ENCODE measurements at regions of chr11 and their contacts with region 1.

Region 1: DNA sequence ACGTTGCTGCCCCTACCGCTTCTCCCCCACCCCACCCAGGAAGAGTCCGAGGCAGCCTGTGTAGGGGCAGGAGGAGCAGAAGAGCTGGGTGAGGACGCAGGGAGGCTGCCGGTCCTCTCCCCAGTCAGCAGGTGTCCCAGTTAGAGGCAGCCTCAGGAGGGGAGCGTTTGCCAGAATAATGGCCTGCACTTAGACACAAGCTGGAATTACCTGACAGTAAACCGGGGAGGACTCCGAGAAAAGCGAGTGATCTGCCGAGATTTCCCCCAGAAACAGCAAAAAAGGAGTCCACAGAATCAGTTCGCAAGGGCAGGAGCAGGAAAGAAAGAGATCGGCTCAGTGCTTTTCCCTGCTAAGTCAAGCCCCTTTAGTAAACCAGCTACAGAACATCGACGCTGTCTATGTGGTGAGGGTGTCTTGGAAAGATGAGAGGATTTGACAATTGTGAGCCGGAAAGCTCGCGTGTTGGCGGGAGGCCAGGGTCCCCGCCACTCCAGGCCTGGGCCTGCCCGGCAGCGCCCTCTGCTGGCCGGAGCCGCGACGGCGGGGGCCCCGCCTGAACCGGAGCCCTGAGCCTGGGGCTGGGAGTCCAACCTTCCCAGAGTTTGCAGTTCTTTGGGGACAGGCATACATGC is 17.7 kb upstream of the THRSP start:
- DNase-seq: peak; percentile 60
- ATAC-seq: peak; percentile 95
- H3K4me3 ChIP-seq: peak overlapping the region; percentile 45 to 77 (median 67)
- H3K27ac ChIP-seq: peak overlapping the region; percentile 35
- H3K4me1 ChIP-seq: peaks cover 68% of the 10 kb centered on the region
- H3K27me3 ChIP-seq: no peaks in the 10 kb centered on the region
- CTCF ChIP-seq: peak; percentile 95
- EP300 ChIP-seq: peak in 1 of 2 experiments; percentile 35; a peak in 1 of 4 replicates
- POLR2A ChIP-seq: no peak
- RAD21 ChIP-seq: peak; percentile 97

Region 2: GRCh38 chr11:77908835-77909234 is 137.1 kb before region 1 on chr11:
- CTCF ChIA-PET with region 1: no interaction called
- POLR2A ChIA-PET with region 1: no interaction called
- in situ Hi-C with region 1: no loop called
- intact Hi-C with region 1: loop called (anchors 5 kb)
- DNase-seq: no peak
- ATAC-seq: no peak
- H3K4me3 ChIP-seq: no peak overlapping the region
- H3K27ac ChIP-seq: no peak overlapping the region
- H3K4me1 ChIP-seq: peaks cover 17% of the 10 kb centered on the region
- H3K27me3 ChIP-seq: no peaks in the 10 kb centered on the region
- CTCF ChIP-seq: no peak
- EP300 ChIP-seq: no peak
- POLR2A ChIP-seq: no peak
- RAD21 ChIP-seq: no peak

Region 3: GRCh38 chr11:77994412-77995362 is 51.3 kb before region 1 on chr11 and contains the start of gene INTS4:
- CTCF ChIA-PET with region 1: interaction called, 12 read pairs
- POLR2A ChIA-PET with region 1: interaction called, 25 read pairs
- in situ Hi-C with region 1: no loop called
- intact Hi-C with region 1: no loop called
- DNase-seq: peak; percentile 99
- ATAC-seq: peak; percentile 98
- H3K4me3 ChIP-seq: peak within 1 kb of the TSS; percentile 82 to 99 (median 83)
- H3K27ac ChIP-seq: peak within 1 kb of the TSS; percentile 77
- H3K4me1 ChIP-seq: peaks cover 22% of the 10 kb centered on the region
- H3K27me3 ChIP-seq: no peaks in the 10 kb centered on the region; a peak in 1 of 5 replicates
- CTCF ChIP-seq: no peak; the same call in 1 of the 2 replicates
- EP300 ChIP-seq: no peak
- POLR2A ChIP-seq: peak; percentile 57 to 75
- RAD21 ChIP-seq: peak; percentile 20; the same call in 1 of the 2 replicates
- total RNA-seq, gene INTS4: 29.6 and 37.3 TPM in 2 replicates

Region 4: DNA sequence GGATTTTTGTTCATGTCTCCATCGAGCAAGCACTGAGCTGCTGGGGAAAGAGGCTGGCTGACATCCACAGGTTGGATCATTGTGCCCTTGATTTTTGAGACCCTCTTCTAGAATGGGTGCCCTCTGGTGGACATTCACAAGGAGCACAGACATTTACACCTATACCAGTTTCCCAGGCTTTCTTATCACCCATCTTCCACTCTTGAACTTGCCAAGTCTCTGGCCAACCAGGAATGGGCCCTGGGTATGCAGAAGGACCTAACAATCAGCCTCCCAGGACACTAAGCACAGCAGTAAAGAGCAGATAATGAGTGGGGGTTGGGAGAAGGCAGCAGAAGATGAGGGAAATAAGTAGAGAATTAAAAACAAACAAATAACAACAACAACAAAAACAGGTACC is 45.8 kb before region 1 on chr11:
- CTCF ChIA-PET with region 1: interaction called, 12 read pairs
- POLR2A ChIA-PET with region 1: interaction called, 25 read pairs
- in situ Hi-C with region 1: loop called (anchors 5 kb)
- intact Hi-C with region 1: loop called (anchors 1 kb)
- DNase-seq: peak; percentile 70
- ATAC-seq: peak; percentile 92
- H3K4me3 ChIP-seq: no peak overlapping the region
- H3K27ac ChIP-seq: no peak overlapping the region
- H3K4me1 ChIP-seq: peaks cover 28% of the 10 kb centered on the region
- H3K27me3 ChIP-seq: no peaks in the 10 kb centered on the region
- CTCF ChIP-seq: peak; percentile 80
- EP300 ChIP-seq: no peak
- POLR2A ChIP-seq: no peak
- RAD21 ChIP-seq: peak; percentile 65; the same call in 1 of the 2 replicates

Region 5: DNA sequence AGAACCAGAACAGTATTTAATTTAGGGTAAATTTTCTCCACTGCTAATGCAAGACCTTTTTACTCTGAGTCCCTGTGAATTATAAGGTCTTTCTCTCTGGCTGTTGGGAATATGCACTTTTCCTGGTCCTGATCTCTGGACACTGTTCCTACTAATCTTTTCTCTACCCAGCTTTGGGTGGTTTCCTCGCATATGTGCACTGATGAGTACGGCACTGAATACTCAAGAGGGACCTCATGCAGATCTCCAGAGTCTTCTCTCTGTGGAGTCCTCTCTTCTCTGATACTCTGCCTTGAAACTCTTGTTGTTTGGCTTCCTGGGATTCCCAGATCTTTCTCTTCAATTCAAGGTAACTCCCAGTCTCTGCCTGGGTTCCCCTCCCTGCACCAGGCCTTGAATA is 36.9 kb before region 1 on chr11:
- CTCF ChIA-PET with region 1: no interaction called
- POLR2A ChIA-PET with region 1: no interaction called
- in situ Hi-C with region 1: loop called (anchors 5 kb)
- intact Hi-C with region 1: no loop called
- DNase-seq: no peak
- ATAC-seq: no peak
- H3K4me3 ChIP-seq: no peak overlapping the region
- H3K27ac ChIP-seq: no peak overlapping the region
- H3K4me1 ChIP-seq: peaks cover 35% of the 10 kb centered on the region
- H3K27me3 ChIP-seq: no peaks in the 10 kb centered on the region
- CTCF ChIP-seq: no peak
- EP300 ChIP-seq: no peak
- POLR2A ChIP-seq: no peak
- RAD21 ChIP-seq: no peak

Region 6: DNA sequence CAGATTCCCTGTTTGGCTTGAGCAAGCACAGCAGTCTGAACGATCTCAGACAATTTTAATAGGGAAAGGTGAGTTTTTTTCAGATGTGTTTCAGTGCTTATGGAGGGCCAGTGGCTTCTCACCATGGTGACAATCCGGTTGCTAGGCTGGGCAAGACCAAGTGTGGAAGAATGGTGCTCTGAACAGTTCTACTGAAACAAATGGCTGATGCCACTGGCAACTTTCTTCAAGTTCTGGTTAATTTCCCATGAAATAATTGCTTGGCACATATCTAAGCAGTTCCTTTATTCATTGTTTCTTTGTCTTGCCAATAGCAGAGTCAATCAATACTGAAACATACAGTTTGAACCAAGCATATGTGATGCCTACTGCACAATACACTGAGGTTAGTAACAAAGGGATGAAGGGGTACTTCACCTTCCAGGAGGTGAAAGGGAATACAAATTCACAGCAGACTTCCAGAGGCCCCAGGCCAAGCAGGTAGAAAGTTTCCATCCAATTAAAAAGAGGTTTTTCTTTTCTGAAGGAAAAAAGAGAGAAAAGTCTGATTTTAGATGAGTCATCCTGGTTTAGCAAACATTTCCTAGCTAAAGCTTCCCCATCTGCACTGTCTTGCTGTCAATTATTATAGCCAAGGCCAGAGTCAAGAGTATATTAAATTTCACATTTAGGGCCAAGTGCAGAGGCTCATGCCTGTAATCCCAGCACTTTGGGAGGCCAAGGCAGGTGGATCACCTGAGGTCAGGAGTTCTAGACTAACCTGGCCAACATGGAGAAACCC is 54.9 kb after region 1 on chr11:
- CTCF ChIA-PET with region 1: no interaction called
- POLR2A ChIA-PET with region 1: interaction called, 4 read pairs
- in situ Hi-C with region 1: no loop called
- intact Hi-C with region 1: loop called (anchors 2 kb)
- DNase-seq: peak; percentile 26
- ATAC-seq: peak; percentile 60
- H3K4me3 ChIP-seq: no peak overlapping the region
- H3K27ac ChIP-seq: peak overlapping the region; percentile 53
- H3K4me1 ChIP-seq: peaks cover 29% of the 10 kb centered on the region
- H3K27me3 ChIP-seq: no peaks in the 10 kb centered on the region
- CTCF ChIP-seq: no peak
- EP300 ChIP-seq: no peak
- POLR2A ChIP-seq: no peak
- RAD21 ChIP-seq: no peak

Region 7: GRCh38 chr11:78312712-78313111 is 266.7 kb after region 1 on chr11:
- CTCF ChIA-PET with region 1: no interaction called
- POLR2A ChIA-PET with region 1: no interaction called
- in situ Hi-C with region 1: no loop called
- intact Hi-C with region 1: no loop called
- DNase-seq: no peak
- ATAC-seq: no peak
- H3K4me3 ChIP-seq: no peak overlapping the region
- H3K27ac ChIP-seq: no peak overlapping the region
- H3K4me1 ChIP-seq: peaks cover 50% of the 10 kb centered on the region
- H3K27me3 ChIP-seq: no peaks in the 10 kb centered on the region; a peak in 1 of 5 replicates
- CTCF ChIP-seq: no peak
- EP300 ChIP-seq: no peak
- POLR2A ChIP-seq: no peak
- RAD21 ChIP-seq: no peak

Measured in HepG2 (cell line).